Activated CD4-positive, alpha-beta T cell treated with anti-CD3 and anti-CD28 coated beads, Interleukin-2, amount 10 ng/mL, durations not matched to agents 24 days and 14 days (primary cell): ENCODE measurements at regions of chr2 and their contacts with region 1.

Region 1: GRCh38 chr2:147628971-147629421 is 215.8 kb upstream of the ACVR2A start:
- DNase-seq: no peak
- H3K4me3 Mint-ChIP-seq: peak overlapping the region; percentile 36
- H3K27ac Mint-ChIP-seq: peak overlapping the region; percentile 60
- H3K4me1 Mint-ChIP-seq: peaks cover 44% of the 10 kb centered on the region
- H3K27me3 Mint-ChIP-seq: no peaks in the 10 kb centered on the region

Region 2: GRCh38 chr2:147182260-147182659 is 446.7 kb before region 1 on chr2:
- intact Hi-C with region 1: loop called (anchors 5 kb)
- DNase-seq: peak; percentile 86
- H3K4me3 Mint-ChIP-seq: peak overlapping the region; percentile 68
- H3K27ac Mint-ChIP-seq: peak overlapping the region; percentile 90
- H3K4me1 Mint-ChIP-seq: peaks cover 21% of the 10 kb centered on the region
- H3K27me3 Mint-ChIP-seq: peaks cover 2% of the 10 kb centered on the region

Region 3: DNA sequence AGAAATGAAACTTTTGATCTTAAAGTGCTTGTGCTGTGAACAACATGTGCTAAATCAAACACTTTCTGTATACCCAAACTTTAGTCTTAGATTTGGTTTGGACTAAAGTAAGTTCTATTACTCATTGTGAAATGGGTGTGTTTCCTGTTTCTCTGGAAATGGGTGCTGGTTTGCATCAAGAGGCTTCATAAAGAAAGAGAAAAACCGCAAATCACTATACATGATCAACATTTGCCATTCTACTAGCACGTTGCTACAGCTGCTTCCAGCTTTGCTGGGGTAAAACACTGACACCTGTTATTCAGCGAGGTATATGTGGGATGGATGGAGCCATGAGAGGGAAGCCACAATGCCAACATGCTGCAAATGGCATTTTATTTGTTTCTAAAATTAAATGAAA is 331.2 kb before region 1 on chr2:
- intact Hi-C with region 1: loop called (anchors 2 kb)
- DNase-seq: peak; percentile 85
- H3K4me3 Mint-ChIP-seq: peak overlapping the region; percentile 34
- H3K27ac Mint-ChIP-seq: peak overlapping the region; percentile 83
- H3K4me1 Mint-ChIP-seq: peaks cover 52% of the 10 kb centered on the region
- H3K27me3 Mint-ChIP-seq: no peaks in the 10 kb centered on the region

Region 4: DNA sequence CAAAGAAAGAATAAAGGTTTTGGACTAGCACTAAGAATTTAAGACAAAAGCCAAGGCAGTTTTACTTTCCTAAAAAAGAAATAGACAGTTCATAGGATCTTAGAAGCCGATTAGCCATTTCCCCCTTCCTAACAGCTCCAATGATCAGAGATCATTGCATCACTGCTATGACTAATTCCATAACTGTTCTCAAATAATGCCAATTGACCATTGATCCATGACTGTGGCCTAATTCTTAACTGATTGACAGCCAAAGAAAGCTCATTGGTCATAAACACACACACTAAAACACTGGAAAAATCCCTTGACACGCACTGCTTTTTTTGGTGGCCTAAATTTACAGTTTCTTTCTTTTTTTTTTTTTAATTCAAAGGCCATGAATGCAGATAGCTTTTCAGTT is 129.2 kb before region 1 on chr2:
- intact Hi-C with region 1: loop called (anchors 5 kb)
- DNase-seq: no peak
- H3K4me3 Mint-ChIP-seq: peak overlapping the region; percentile 55
- H3K27ac Mint-ChIP-seq: peak overlapping the region; percentile 87
- H3K4me1 Mint-ChIP-seq: peaks cover 59% of the 10 kb centered on the region
- H3K27me3 Mint-ChIP-seq: no peaks in the 10 kb centered on the region

Region 5: DNA sequence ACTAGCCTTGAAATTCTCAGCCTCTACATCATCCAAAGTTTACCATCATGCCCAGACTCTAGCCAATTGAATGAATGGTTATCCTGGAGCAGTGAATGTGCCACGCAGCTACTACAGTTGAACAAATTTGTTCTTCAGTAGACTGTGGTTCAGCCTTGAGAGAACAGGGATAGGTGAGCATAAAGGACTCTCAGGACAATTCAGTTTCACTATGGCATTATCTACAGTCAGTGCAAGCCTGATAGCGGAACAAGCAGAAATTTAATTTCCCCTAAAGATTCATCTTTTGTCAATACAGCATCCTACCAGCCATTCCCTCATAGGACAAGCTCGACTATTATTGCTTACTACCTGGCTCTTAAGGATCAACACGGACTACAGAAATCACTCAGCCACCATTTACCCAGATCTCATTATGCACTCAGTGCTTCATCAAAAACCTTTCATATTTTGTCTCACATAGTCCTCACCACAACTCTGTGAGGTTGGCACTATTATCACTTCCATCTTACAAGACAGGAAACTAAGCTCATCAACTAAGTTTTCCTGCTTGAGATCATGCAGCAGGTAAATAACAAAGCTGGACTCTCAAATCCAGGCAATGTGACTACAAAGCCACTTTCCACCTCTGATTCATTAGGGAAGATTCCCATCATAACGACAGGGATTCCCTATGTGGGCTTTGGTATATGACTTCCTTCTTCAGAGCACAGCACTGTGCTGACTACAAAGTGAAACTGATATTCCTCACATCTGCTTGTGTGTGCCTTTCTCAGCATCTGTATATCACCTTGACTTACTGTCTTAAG is 34.4 kb after region 1 on chr2:
- intact Hi-C with region 1: loop called (anchors 1 kb)
- DNase-seq: peak; percentile 77
- H3K4me3 Mint-ChIP-seq: peak overlapping the region; percentile 55
- H3K27ac Mint-ChIP-seq: peak overlapping the region; percentile 82
- H3K4me1 Mint-ChIP-seq: peaks cover 24% of the 10 kb centered on the region
- H3K27me3 Mint-ChIP-seq: no peaks in the 10 kb centered on the region

Region 6: GRCh38 chr2:148020111-148021058 is 391.4 kb after region 1 on chr2 and contains the start of gene ORC4:
- intact Hi-C with region 1: loop called (anchors 5 kb)
- DNase-seq: peak; percentile 98
- H3K4me3 Mint-ChIP-seq: peak within 1 kb of the TSS; percentile 94
- H3K27ac Mint-ChIP-seq: peak within 1 kb of the TSS; percentile 93
- H3K4me1 Mint-ChIP-seq: peaks cover 45% of the 10 kb centered on the region
- H3K27me3 Mint-ChIP-seq: no peaks in the 10 kb centered on the region
- total RNA-seq, gene ORC4: 27.0 and 36.2 TPM in 2 replicates